OCI-LY7 (cell line): ENCODE measurements at regions of chr18 and their contacts with region 1.

Region 1: GRCh38 chr18:3493501-3494244 is 43.7 kb downstream of the TGIF1 start:
- DNase-seq: peak; percentile 50
- H3K4me3 ChIP-seq: peak overlapping the region; percentile 56
- H3K27ac ChIP-seq: peak overlapping the region; percentile 89
- H3K4me1 ChIP-seq: peaks cover 70% of the 10 kb centered on the region
- CTCF ChIP-seq: no peak

Region 2: GRCh38 chr18:3454365-3455089 is 39.1 kb before region 1 on chr18:
- CTCF ChIA-PET with region 1: no interaction called
- POLR2A ChIA-PET with region 1: interaction called, 16 read pairs
- intact Hi-C with region 1: no loop called
- DNase-seq: peak; percentile 61
- H3K4me3 ChIP-seq: peak overlapping the region; percentile 88
- H3K27ac ChIP-seq: peak overlapping the region; percentile 72
- H3K4me1 ChIP-seq: peaks cover 48% of the 10 kb centered on the region
- CTCF ChIP-seq: peak; percentile 98

Region 3: GRCh38 chr18:3466045-3466444 is 27.6 kb before region 1 on chr18:
- CTCF ChIA-PET with region 1: no interaction called
- POLR2A ChIA-PET with region 1: interaction called, 14 read pairs
- intact Hi-C with region 1: no loop called
- DNase-seq: no peak
- H3K4me3 ChIP-seq: no peak overlapping the region
- H3K27ac ChIP-seq: no peak overlapping the region
- H3K4me1 ChIP-seq: peaks cover 16% of the 10 kb centered on the region
- CTCF ChIP-seq: no peak